Mucosa of descending colon (tissue), 3 donors: ENCODE measurements at regions of chrX and their contacts with region 1.

Region 1: GRCh38 chrX:136608295-136609171 is 39.4 kb upstream of the CD40LG start:
- DNase-seq: peak; percentile 51 to 69 (median 68)
- ATAC-seq: peak; percentile 78
- H3K4me3 ChIP-seq: no peak overlapping the region
- H3K4me1 ChIP-seq: no peaks in the 10 kb centered on the region
- CTCF ChIP-seq: no peak

Region 2: GRCh38 chrX:136694431-136695087 is 86.0 kb after region 1 on chrX:
- intact Hi-C with region 1: loop called in 1 of 2 experiments (anchors 10 kb)
- DNase-seq: no peak
- ATAC-seq: peak; percentile 74
- H3K4me3 ChIP-seq: no peak overlapping the region
- H3K4me1 ChIP-seq: no peaks in the 10 kb centered on the region
- CTCF ChIP-seq: no peak